Astrocyte of the cerebellum (primary cell): ENCODE measurements at regions of chr1 and their contacts with region 1.

Region 1: DNA sequence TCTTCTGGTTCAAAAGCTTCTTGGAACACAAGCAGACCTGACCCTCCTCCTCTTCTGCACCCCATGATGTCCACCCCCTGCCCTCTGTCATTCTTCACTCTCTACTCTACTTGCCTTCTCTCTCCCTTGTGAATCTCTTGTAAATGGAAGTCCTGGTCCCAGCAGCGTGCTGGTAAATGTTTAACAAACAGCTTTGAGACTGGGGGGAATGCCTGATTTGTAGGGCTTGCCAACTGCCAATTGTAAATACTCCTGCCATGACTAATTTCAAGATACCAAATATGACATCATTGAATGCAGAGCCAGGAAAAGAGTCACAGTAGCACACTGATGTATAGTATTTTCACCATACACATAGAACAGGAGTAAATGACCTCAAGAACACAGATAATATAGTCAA is 40.9 kb upstream of the LRRN2 start:
- DNase-seq: no peak
- H3K4me3 ChIP-seq: no peak overlapping the region
- CTCF ChIP-seq: no peak

Region 2: GRCh38 chr1:204670152-204670927 is 56.1 kb before region 1 on chr1:
- in situ Hi-C with region 1: loop called (anchors 5 kb)
- DNase-seq: no peak
- H3K4me3 ChIP-seq: no peak overlapping the region
- CTCF ChIP-seq: no peak